ENCODE measurements at regions of chr7 and their contacts with region 1.

Region 1: DNA sequence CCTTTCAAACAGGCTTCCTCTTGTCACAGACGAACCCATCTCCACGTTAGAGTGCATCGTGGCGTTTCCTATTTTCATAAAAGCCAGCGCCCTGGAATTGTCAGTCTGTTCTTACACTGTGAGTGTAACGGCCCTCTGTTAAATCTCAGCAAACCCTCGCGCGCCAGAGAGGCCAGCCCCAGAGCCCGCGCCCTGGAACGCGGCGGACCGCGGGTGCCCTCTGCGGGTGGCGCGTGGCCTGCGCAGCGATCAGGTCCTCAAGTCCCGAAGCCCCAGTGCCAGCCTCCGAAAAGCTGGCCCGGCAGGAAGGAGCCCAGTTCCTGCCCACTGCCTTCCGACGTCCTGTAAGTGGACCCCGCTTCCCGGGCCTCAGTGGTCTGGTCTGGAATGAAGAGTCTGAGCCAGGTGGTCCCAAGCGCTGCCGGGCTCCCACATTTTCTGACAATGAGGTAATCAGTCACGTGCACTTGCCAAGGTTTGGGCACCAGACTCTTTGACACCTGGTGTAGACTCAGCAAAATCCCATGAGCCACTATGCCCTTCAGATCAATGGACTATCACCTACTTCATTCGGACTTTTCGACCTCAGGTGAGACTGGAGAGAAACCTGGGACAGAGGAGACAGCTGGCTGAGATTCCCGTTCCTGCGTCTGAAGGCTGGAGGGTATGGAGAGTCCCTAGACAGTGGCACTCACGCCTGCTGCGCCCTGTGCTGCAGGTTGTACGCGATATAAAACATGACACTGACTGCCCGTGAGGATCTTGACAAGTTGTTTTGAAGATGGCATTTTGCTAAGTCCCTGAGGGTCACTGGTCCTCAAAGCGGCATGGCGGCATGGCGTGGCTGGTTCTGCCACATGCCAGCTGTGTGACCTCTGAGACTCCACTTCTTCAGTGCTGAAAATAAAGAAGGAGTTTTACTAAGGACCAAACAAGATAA is 109.4 kb upstream of the LANCL2 start:
- DNase-seq: peak; percentile 70
- ATAC-seq: peak; percentile 93
- H3K4me3 Mint-ChIP-seq: peak overlapping the region; percentile 88
- H3K27ac Mint-ChIP-seq: no peak overlapping the region
- H3K4me1 Mint-ChIP-seq: peaks cover 16% of the 10 kb centered on the region
- H3K27me3 Mint-ChIP-seq: peaks cover 50% of the 10 kb centered on the region
- CTCF ChIP-seq: no peak

Region 2: GRCh38 chr7:54758702-54759592 is 496.8 kb before region 1 on chr7 and contains the start of gene SEC61G:
- CTCF ChIA-PET with region 1: interaction called, 24 read pairs
- POLR2A ChIA-PET with region 1: interaction called, 9 read pairs
- intact Hi-C with region 1: no loop called
- DNase-seq: peak; percentile 89
- ATAC-seq: peak; percentile 95
- H3K4me3 Mint-ChIP-seq: peak within 1 kb of the TSS; percentile 98
- H3K27ac Mint-ChIP-seq: peak within 1 kb of the TSS; percentile 92
- H3K4me1 Mint-ChIP-seq: peaks cover 21% of the 10 kb centered on the region
- H3K27me3 Mint-ChIP-seq: no peaks in the 10 kb centered on the region
- CTCF ChIP-seq: no peak
- total RNA-seq, gene SEC61G: 57.3 and 65.8 TPM in 2 replicates

Region 3: DNA sequence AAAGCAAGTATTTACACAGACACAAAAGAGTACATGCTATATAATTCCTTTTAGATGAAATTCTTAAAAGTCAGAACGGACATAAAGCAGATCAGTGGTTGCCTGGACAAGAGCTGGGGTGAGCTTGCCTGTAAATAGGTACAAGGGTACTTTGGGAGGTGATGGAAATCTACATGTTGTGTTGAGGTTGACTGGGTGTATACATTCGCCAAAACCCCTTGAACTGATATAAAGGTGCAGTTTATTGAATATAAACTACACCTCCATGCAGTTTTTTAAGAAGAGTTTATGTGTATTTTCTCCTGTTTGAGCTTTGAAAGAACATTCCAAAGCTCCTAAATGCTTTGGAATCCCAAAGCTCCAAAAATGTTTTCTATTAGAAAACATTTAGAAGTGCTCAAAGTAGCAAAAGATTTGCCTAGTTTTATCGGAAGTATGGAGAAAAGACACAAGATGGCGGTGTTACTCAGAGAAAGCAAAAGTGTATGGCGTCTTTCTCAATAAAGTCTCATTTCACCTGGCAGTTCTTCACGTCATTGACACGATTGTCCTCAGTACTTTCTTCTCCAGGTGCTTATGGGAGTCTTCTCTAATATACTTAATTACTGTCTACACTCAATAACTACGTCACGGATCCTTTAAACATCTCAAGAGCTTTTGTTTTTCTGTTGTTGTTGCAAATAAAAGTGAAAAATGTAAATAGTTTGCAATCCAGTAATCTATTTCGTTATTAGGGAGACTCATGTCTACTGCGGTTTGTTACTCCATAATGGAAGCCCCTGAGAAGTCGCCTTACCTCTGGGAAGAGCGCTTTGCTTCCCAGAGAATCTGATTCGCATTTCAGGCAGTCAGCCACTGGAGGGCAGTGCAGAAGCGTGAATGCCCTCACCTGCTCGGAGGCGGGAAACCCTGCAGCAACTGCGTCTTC is 482.0 kb before region 1 on chr7:
- CTCF ChIA-PET with region 1: interaction called, 129 read pairs
- POLR2A ChIA-PET with region 1: no interaction called
- intact Hi-C with region 1: loop called (anchors 1 kb)
- DNase-seq: peak; percentile 34
- ATAC-seq: peak; percentile 85
- H3K4me3 Mint-ChIP-seq: peak overlapping the region; percentile 76
- H3K27ac Mint-ChIP-seq: no peak overlapping the region
- H3K4me1 Mint-ChIP-seq: peaks cover 6% of the 10 kb centered on the region
- H3K27me3 Mint-ChIP-seq: peaks cover 18% of the 10 kb centered on the region
- CTCF ChIP-seq: peak; percentile 95

Region 4: DNA sequence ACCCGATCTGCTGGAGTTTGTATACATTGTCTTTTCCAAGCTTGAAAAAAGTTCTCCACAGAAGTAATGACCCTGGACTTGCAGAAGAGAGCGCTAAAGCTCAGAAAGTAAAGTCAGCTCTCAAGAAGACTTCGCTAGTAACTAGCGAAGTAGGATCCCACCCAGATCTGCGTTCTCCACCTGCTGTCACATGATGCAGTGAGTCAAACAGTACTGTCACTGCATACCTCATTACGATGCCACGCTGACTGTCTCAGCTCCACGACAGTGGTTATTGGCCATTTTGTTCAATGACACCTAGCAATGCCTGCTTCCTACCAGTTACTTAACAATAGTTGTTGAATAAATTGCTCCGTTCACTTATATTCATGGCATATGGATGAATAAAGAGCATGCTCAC is 467.1 kb before region 1 on chr7:
- CTCF ChIA-PET with region 1: interaction called, 19 read pairs
- POLR2A ChIA-PET with region 1: no interaction called
- intact Hi-C with region 1: loop called (anchors 1 kb)
- DNase-seq: no peak
- ATAC-seq: peak; percentile 40
- H3K4me3 Mint-ChIP-seq: no peak overlapping the region
- H3K27ac Mint-ChIP-seq: no peak overlapping the region
- H3K4me1 Mint-ChIP-seq: no peaks in the 10 kb centered on the region
- H3K27me3 Mint-ChIP-seq: peaks cover 26% of the 10 kb centered on the region
- CTCF ChIP-seq: no peak

Region 5: DNA sequence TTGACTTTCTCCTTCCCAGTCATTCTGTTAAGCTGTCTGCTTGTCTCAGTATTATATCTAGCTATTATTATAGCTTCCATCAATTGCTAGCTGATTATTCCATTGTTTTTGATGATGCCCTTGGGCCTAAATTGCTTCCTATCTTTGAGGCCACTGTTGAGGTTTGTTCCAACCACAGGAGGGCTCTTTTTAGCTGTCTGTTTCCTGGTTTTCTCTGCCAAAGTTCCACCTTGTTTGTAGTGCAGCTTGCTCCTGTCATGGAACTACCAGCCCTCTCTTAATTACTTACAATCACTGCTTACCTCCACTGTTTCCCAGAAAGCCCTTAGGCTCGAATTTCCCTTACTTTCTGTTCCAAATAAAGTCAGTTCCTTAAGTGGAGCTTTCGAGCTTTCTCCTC is 378.1 kb before region 1 on chr7:
- CTCF ChIA-PET with region 1: no interaction called
- POLR2A ChIA-PET with region 1: no interaction called
- intact Hi-C with region 1: loop called (anchors 10 kb)
- DNase-seq: no peak
- ATAC-seq: no peak
- H3K4me3 Mint-ChIP-seq: no peak overlapping the region
- H3K27ac Mint-ChIP-seq: no peak overlapping the region
- H3K4me1 Mint-ChIP-seq: no peaks in the 10 kb centered on the region
- H3K27me3 Mint-ChIP-seq: peaks cover 3% of the 10 kb centered on the region
- CTCF ChIP-seq: no peak

Region 6: DNA sequence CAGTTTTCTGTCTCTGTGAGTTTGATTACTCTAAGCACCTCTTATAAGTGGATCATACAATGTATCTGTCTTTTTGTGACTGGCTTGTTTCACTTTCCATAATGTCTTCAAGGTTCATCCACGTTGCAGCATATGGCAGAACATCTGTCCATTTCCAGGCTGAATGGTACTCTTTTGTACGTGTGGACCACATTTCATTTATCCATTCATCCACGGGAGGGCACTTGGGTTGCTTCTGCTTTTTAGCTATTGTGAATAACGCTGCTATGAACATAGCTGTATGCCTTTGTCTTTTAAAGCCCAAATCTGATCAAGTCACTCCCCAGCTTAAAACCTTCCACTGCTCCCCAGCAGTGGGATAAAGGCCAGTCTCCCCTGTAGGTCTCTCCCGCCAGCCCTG is 205.5 kb before region 1 on chr7:
- CTCF ChIA-PET with region 1: interaction called, 31 read pairs
- POLR2A ChIA-PET with region 1: no interaction called
- intact Hi-C with region 1: loop called (anchors 1 kb)
- DNase-seq: no peak
- ATAC-seq: no peak
- H3K4me3 Mint-ChIP-seq: no peak overlapping the region
- H3K27ac Mint-ChIP-seq: no peak overlapping the region
- H3K4me1 Mint-ChIP-seq: no peaks in the 10 kb centered on the region
- H3K27me3 Mint-ChIP-seq: peaks cover 6% of the 10 kb centered on the region
- CTCF ChIP-seq: no peak

Region 7: DNA sequence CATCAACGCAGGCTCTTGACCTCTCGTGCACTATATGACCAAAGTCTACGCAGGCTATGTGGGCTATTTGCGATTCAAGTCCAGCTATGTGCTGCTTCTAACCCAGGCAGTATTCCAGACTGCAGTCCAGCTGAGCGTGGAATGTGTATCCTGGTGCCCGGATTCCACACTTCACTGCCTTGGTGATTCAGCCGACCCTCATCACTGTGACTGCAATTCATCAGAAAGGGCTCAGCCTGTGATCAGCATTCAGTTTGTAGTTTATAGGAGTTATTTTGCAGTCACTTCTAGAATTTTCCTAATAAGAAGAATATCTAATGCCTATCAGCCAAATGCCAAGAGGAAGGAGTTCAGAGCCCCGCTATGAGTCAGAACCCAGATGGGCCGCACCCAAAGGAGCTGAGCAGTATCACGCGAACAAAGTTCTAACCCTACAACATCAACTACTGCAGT is 10.5 kb before region 1 on chr7:
- CTCF ChIA-PET with region 1: interaction called, 13 read pairs
- POLR2A ChIA-PET with region 1: no interaction called
- intact Hi-C with region 1: no loop called
- DNase-seq: no peak
- ATAC-seq: no peak
- H3K4me3 Mint-ChIP-seq: no peak overlapping the region
- H3K27ac Mint-ChIP-seq: no peak overlapping the region
- H3K4me1 Mint-ChIP-seq: no peaks in the 10 kb centered on the region
- H3K27me3 Mint-ChIP-seq: peaks cover 9% of the 10 kb centered on the region
- CTCF ChIP-seq: no peak

Measured in activated B cell treated with CpG ODN at 0.5 μM for 24 hours (primary cell).